ENCODE measurements at regions of chr14 and their contacts with region 1.

Region 1: DNA sequence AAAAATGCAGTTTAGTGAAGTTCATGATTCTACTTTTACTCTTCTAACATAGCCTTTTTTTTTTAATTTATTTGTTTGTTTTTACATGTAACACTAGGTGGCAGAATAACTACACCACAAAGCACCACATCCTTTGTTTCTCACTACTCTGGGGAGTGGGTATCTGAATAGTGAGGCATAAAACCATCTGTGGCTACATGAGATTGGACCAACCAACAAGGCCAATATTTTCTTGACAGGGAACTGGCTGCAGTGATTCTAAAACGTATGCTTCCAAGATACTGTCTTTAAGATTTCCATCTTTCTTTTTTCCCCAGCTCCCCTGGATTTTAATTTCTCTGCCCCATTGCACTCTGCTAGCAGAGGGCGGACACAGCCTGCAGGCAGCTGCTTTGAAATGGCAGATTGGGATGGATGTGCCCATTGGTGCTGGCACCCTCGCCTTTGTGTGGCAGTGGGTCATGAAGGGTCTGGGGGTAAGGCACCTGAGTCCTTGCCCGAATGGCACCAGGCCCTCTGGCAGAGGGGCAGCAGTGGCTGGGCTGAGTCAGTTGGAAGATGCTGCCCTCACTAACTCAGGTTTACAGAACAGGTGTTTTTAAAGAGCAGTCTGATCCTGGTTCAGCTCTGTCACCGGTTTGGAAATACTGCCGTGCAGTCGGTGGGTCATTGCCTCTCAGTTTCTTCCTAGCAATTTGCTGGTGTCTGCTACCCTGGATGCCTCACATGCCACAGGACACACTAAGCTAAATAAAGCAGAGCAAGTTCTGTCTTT is 429.1 kb downstream of the RAD51B start:
- H3K4me3 Mint-ChIP-seq: no peak overlapping the region
- H3K27ac Mint-ChIP-seq: peak overlapping the region; percentile 78
- H3K4me1 Mint-ChIP-seq: peaks cover 59% of the 10 kb centered on the region
- H3K27me3 Mint-ChIP-seq: no peaks in the 10 kb centered on the region

Region 2: DNA sequence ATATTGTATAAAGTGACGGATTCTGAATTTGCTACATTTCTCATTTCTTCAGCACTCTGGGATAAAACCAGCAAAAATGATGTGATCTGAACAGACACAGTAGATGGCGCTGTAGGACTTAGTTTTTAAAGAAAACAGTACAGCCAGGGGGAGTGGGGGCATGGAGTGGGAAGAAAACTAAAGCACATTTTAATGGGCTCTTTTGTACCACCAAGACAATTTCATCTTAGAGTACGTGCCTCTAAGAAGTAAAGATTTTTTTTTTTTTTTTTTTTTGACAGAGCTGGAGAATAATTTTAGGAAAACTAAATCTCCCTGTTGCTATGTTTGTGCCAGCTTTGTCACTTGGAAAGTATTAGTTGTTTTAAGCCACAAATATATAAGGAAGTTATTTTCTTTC is 304.7 kb before region 1 on chr14:
- intact Hi-C with region 1: loop called (anchors 2 kb)
- H3K4me3 Mint-ChIP-seq: no peak overlapping the region
- H3K27ac Mint-ChIP-seq: no peak overlapping the region
- H3K4me1 Mint-ChIP-seq: peaks cover 20% of the 10 kb centered on the region
- H3K27me3 Mint-ChIP-seq: no peaks in the 10 kb centered on the region

Region 3: DNA sequence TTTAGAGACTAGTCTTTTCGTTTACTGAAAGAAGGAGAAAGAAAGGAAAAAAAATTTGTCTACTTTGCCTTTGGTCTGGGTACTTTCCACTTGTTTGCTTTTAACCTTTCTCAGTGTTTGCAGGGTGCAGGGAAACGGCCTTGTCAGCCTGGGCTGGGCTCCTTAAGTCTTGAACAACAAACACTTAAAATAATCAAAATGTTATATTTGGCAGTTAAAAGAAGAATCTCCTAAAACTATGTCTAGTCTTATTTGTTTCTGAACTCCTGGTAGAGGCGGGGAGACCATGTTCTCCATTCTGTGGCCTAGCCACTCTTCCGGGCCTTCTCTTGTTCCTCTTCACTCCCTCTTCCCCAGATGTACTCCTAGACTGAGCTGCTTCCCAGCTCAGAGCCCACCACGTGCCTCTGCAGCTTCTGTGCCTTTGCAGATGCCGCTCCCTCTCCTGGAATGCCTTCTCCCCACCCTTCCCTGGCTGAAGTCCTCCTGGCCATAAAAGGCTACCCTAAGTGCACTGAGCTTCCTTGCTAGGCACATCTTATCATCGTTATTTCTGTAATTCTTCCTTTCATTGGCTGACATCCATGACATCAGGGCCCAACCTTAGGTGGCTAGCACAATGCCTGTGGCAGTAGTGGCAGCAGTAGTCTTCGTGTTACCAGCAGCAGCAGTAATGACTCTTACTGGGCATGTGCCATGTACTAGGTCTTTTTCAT is 111.3 kb after region 1 on chr14:
- intact Hi-C with region 1: loop called (anchors 10 kb)
- H3K4me3 Mint-ChIP-seq: no peak overlapping the region
- H3K27ac Mint-ChIP-seq: peak overlapping the region; percentile 89
- H3K4me1 Mint-ChIP-seq: peaks cover 46% of the 10 kb centered on the region
- H3K27me3 Mint-ChIP-seq: no peaks in the 10 kb centered on the region

Region 4: DNA sequence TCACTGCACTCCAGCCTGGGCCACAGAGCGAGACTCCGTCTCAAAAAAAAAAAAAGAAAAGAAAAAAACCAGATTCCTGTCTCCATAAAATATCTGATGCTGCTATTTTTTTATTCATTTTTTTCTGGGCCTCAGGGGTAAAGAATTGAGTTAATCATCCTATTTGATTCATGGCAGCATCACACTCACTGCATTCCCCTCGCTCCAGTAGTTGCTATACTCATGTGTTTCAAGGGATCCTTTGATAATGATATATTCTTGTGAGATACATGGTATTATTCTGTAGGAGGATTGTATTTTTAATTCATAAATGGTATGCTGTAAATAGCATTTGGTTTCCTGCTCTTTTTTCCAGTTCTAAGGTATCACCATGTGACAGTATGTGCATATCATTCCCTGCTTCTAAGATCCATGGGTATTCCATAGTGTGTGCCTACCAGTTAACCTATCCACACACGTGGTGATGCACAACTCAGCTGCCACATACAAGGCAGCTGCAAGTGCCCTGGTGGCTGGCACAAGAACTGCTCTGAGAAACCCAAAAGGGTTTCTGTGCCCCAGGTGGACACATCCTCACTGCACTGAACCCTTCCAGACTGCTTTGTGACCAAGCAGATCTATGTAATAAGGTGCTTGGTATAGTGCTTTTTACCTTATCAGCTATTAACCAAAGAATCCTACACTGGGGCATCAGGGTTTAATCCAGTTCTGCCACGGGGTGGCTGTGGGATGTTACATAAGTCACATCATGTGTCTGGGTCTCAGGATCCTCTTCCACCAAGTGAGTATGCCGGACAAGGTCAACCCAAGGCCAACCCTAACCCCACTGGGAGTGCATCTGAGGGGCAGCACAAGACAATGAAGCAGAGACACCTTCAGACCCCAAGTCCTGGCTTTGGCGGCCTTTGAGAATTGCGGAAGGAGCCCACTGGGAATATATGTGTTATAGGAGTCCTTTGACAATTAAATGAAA is 469.6 kb after region 1 on chr14:
- intact Hi-C with region 1: loop called (anchors 10 kb)
- H3K4me3 Mint-ChIP-seq: no peak overlapping the region
- H3K27ac Mint-ChIP-seq: no peak overlapping the region
- H3K4me1 Mint-ChIP-seq: peaks cover 44% of the 10 kb centered on the region
- H3K27me3 Mint-ChIP-seq: peaks cover 12% of the 10 kb centered on the region

Region 5: GRCh38 chr14:68816262-68816942 is 567.7 kb after region 1 on chr14:
- intact Hi-C with region 1: loop called (anchors 2 kb)
- H3K4me3 Mint-ChIP-seq: peak overlapping the region; percentile 71
- H3K27ac Mint-ChIP-seq: peak overlapping the region; percentile 95
- H3K4me1 Mint-ChIP-seq: peaks cover 49% of the 10 kb centered on the region
- H3K27me3 Mint-ChIP-seq: no peaks in the 10 kb centered on the region

Region 6: DNA sequence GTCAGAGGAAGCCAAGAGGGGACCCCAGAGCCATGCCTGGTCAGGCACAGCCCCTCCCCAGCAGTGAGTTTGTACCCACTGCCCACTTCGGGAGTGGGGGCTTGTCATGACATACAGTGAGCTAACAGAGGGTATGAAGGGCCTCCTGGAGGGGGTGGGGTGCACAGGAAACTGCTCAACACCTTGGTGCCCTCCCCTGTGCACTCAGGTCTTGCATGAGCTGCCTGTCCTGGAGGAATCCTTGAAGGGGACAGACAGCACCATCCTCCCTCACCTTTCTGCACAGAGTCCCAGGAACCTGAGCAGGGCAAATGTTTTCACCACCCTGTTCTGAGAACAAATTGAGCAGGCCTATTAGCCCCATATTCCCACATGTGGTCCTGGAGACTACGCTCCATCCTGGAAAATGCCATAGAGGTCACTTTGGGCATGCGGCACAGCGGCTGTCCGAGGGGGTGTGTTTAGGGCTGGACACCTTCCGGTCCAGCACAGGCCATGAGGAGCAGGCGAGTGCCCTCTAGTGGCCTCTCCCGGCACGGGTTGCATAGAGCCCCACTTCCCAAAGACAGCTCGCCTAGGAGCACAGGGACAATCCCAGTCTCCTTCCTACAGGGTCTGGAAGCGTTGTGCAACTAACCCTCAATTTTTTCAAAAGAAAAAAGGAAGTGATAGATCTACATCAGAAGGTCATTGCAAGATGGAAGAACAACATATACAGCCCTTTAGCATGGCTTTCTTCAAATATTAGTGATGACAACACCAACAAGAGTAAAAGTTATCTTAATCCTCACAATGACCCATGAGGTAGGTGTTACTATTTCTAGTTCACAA is 576.1 kb after region 1 on chr14:
- intact Hi-C with region 1: loop called (anchors 2 kb)
- H3K4me3 Mint-ChIP-seq: no peak overlapping the region
- H3K27ac Mint-ChIP-seq: no peak overlapping the region
- H3K4me1 Mint-ChIP-seq: peaks cover 35% of the 10 kb centered on the region
- H3K27me3 Mint-ChIP-seq: peaks cover 2% of the 10 kb centered on the region

Measured in dendritic cell treated with granulocyte-macrophage colony-stimulating factor and Interleukin-4, amounts not matched to agents 40 ng/mL and 50 ng/mL, for 4 days (primary cell).